ENCODE measurements at regions of chr1 and their contacts with region 1.

Region 1: GRCh38 chr1:230772457-230773395 is 25.5 kb downstream of the CAPN9 start:
- DNase-seq: no peak
- H3K4me3 ChIP-seq: no peak overlapping the region
- H3K27ac ChIP-seq: no peak overlapping the region
- H3K4me1 ChIP-seq: no peaks in the 10 kb centered on the region
- H3K27me3 ChIP-seq: no peaks in the 10 kb centered on the region
- CTCF ChIP-seq: peak; percentile 40 to 86 (median 61)
- EP300 ChIP-seq: no peak
- POLR2A ChIP-seq: no peak

Region 2: GRCh38 chr1:230661976-230662375 is 110.8 kb before region 1 on chr1:
- in situ Hi-C with region 1: loop called in 1 of 4 experiments (anchors 25 kb)
- intact Hi-C with region 1: no loop called
- DNase-seq: no peak
- H3K4me3 ChIP-seq: no peak overlapping the region
- H3K27ac ChIP-seq: no peak overlapping the region
- H3K4me1 ChIP-seq: no peaks in the 10 kb centered on the region
- H3K27me3 ChIP-seq: no peaks in the 10 kb centered on the region
- CTCF ChIP-seq: no peak
- EP300 ChIP-seq: no peak
- POLR2A ChIP-seq: no peak